ENCODE measurements at regions of chr17 and their contacts with region 1.

Region 1: DNA sequence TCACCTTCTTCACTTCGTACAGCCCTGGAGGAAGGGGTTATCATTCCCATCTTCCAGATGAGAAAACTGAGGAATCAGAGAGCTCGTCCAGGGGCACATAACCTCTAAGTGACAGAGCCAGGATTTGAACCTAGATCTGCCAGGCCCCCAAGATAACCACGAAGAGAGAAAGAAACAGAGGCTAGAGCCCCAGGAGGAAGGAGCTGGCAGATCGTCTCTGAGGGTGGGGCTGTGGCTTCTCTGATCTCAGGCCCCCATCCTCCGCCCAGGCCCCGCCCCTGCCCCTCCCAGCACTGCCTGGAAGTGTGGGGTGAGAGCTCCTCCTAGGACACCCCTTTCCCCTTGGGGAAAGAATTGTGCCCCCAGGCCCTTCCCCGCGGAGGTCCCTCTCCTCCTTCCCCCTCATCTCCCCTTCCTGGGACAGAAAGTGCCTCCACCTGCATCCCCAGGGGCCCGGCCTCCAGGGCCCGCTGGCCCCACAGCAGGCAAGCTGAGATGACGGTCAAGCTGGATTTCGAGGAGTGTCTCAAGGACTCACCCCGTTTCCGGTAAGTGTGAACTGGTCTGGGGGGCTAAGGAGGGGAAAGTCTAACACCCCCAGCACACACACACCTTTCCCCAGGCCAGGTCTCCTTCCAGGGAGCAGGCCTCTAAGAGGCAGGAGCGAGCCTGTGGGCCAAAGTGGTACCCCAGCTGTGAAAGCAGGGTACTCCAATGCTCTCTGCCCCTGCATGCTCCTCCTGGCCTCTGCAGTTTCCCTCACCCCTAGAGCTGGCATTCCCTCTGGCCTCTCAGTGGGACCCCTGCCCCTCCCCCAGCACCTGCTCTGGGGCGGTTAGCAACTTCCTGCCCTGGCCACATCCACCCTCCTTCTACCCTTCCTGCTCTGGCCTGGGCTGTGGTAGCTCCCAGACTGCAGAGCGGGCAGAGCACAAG is at the start of gene ACAP1:
- DNase-seq: peak; percentile 94
- H3K4me3 Mint-ChIP-seq: peak within 1 kb of the TSS; percentile 91
- H3K27ac Mint-ChIP-seq: peak within 1 kb of the TSS; percentile 97
- H3K4me1 Mint-ChIP-seq: peaks cover 66% of the 10 kb centered on the region
- H3K27me3 Mint-ChIP-seq: no peaks in the 10 kb centered on the region
- total RNA-seq, gene ACAP1: 727 to 775 TPM

Region 2: GRCh38 chr17:7323731-7324437 is 12.6 kb before region 1 on chr17:
- CTCF ChIA-PET with region 1: interaction called, 12 read pairs
- POLR2A ChIA-PET with region 1: no interaction called
- DNase-seq: peak; percentile 71
- H3K4me3 Mint-ChIP-seq: no peak overlapping the region
- H3K27ac Mint-ChIP-seq: no peak overlapping the region
- H3K4me1 Mint-ChIP-seq: peaks cover 30% of the 10 kb centered on the region
- H3K27me3 Mint-ChIP-seq: no peaks in the 10 kb centered on the region

Measured in activated CD4-positive, alpha-beta T cell treated with anti-CD3 and anti-CD28 coated beads, Interleukin-2, amount 10 ng/mL, durations not matched to agents 7 days and 5 days (primary cell).